A549 (cell line): ENCODE measurements at regions of chr2 and their contacts with region 1.

Region 1: DNA sequence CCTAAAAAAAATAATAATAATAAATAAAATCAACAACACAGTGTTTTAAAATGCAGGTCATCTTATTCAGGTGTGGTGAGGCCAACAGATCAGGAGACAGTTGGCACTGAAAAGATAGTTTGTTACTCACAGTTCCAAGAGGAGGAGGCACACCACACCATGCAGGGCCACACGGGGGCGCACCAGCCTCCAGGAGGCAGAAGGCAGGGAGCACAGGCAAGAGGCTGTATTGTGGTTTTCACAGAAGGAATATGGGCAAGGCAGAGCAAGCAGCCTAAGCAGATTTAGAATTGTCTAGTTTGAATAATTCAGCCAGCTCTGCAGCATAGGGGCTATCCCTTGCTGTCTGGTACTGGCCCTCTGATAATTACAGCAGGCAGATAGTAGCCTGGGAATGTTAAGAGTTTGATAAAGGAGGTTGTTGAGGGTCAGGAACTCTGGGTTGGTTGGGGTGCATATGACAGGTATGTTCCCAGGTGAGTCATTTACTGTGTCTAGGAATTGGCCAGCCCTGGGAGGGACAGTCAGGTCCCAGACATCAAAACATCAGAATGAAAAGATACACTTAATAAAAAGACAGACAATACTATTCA is 31.3 kb downstream of the KIAA2012 start:
- DNase-seq: peak; percentile 31 to 65
- ATAC-seq: peak; percentile 74 to 94; a peak in 5 of 6 replicates
- H3K4me3 ChIP-seq: no peak overlapping the region
- H3K27ac ChIP-seq: peak overlapping the region in 1 of 2 experiments; percentile 25; a peak in 2 of 6 replicates
- H3K4me1 ChIP-seq: peaks cover 4% of the 10 kb centered on the region
- CTCF ChIP-seq: peak; percentile 76
- EP300 ChIP-seq: no peak
- POLR2A ChIP-seq: no peak
- RAD21 ChIP-seq: peak; percentile 74 to 77

Region 2: DNA sequence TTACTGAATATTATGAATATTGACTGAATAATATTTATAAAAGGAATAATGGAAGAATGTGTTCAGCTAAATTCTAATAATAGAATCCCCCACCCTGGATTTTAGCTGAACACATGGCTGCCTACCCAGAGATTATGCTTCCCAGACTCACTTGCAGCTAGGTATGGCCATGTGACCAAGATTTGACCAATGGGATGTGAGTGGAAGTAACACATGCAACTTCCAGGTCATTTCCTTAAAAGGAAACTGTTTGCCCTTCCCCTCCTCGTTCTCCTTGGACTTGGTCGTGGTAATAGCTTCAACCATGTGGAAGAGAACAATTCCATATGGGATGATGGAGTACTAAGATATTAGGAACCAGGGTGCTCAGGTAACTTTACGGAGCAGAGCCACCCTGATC is 16.5 kb after region 1 on chr2:
- CTCF ChIA-PET with region 1: interaction called, 10 read pairs
- POLR2A ChIA-PET with region 1: no interaction called
- DNase-seq: no peak
- ATAC-seq: no peak
- H3K4me3 ChIP-seq: no peak overlapping the region
- H3K27ac ChIP-seq: no peak overlapping the region
- H3K4me1 ChIP-seq: peaks cover 11% of the 10 kb centered on the region
- CTCF ChIP-seq: no peak
- EP300 ChIP-seq: no peak
- POLR2A ChIP-seq: no peak
- RAD21 ChIP-seq: no peak